GM12878 (cell line): ENCODE measurements at regions of chrX and their contacts with region 1.

Region 1: GRCh38 chrX:12894074-12895030 is 12.1 kb upstream of the TLR8 start:
- DNase-seq: no peak
- ATAC-seq: peak; percentile 61
- H3K4me3 ChIP-seq: no peak overlapping the region
- H3K27ac ChIP-seq: no peak overlapping the region
- H3K4me1 ChIP-seq: peaks cover 43% of the 10 kb centered on the region
- H3K27me3 ChIP-seq: no peaks in the 10 kb centered on the region
- CTCF ChIP-seq: peak; percentile 84 to 88 (median 84)
- EP300 ChIP-seq: no peak
- POLR2A ChIP-seq: no peak
- RAD21 ChIP-seq: peak; percentile 96

Region 2: GRCh38 chrX:12825801-12826200 is 68.6 kb before region 1 on chrX:
- CTCF ChIA-PET with region 1: interaction called, 23 read pairs
- POLR2A ChIA-PET with region 1: no interaction called
- RAD21 ChIA-PET with region 1: interaction called, 3 read pairs
- SMC1A ChIA-PET with region 1: interaction called, 5 read pairs
- in situ Hi-C with region 1: loop called (anchors 5 kb)
- intact Hi-C with region 1: no loop called
- DNase-seq: no peak
- ATAC-seq: no peak
- H3K4me3 ChIP-seq: no peak overlapping the region
- H3K27ac ChIP-seq: no peak overlapping the region
- H3K4me1 ChIP-seq: no peaks in the 10 kb centered on the region
- H3K27me3 ChIP-seq: no peaks in the 10 kb centered on the region
- CTCF ChIP-seq: no peak
- EP300 ChIP-seq: no peak
- POLR2A ChIP-seq: no peak
- RAD21 ChIP-seq: no peak

Region 3: DNA sequence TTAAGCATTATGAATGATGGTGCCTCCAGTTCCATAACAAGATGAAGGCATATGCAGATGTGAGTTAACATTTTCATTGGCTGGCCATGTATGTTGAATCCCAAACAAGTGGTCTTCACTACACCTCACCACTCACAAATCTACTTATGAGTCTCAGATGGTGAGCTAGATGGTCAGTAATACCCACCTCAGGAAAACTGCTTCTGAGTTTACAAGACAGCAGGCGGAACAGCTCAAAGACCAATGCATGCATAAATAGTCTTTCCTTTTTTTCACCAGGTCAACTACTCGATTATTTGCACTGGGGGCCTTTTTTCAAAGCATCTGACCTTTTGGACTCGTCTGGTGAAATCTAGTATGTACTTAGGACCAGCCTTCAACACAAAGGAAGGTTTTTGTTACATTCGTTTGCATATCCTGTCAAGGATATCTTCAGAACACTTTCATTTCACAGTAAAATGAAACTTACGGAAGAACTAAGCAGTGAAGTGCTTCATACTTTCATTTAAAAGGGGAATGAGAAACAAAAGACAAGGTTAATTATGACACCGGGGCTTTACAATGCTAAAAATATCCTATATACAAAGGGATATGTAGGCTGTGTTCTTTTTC is 50.6 kb before region 1 on chrX:
- CTCF ChIA-PET with region 1: interaction called, 9 read pairs
- POLR2A ChIA-PET with region 1: interaction called, 4 read pairs
- RAD21 ChIA-PET with region 1: interaction called, 7 read pairs
- SMC1A ChIA-PET with region 1: interaction called, 45 read pairs
- in situ Hi-C with region 1: no loop called
- intact Hi-C with region 1: loop called (anchors 1 kb)
- DNase-seq: peak; percentile 85
- ATAC-seq: peak; percentile 92
- H3K4me3 ChIP-seq: peak overlapping the region; percentile 42; the same call in 1 of the 2 replicates
- H3K27ac ChIP-seq: peak overlapping the region; percentile 100
- H3K4me1 ChIP-seq: peaks cover 29% of the 10 kb centered on the region
- H3K27me3 ChIP-seq: no peaks in the 10 kb centered on the region
- CTCF ChIP-seq: no peak
- EP300 ChIP-seq: peak in 1 of 2 experiments; percentile 57; a peak in 1 of 4 replicates
- POLR2A ChIP-seq: no peak
- RAD21 ChIP-seq: no peak

Region 4: DNA sequence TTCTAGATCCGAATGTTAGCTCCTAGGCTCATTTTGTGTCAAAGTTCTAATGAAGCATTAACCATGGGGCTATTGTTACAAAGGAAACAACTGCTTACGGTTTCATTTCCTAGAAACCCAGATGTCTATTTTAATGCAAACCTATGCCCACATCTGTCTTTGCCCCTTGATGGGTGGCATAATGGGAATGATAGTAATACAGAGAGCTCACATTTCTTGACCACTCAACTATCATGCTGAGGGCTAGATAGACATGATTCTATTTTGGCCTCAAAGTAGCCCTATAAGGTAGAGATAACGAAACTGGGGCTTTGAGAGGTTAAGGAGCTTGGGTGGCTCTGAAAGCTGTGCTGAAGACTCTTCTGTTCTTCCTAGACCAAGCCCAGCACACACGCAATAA is 25.6 kb before region 1 on chrX:
- CTCF ChIA-PET with region 1: interaction called, 7 read pairs
- POLR2A ChIA-PET with region 1: interaction called, 8 read pairs
- RAD21 ChIA-PET with region 1: interaction called, 47 read pairs
- SMC1A ChIA-PET with region 1: interaction called, 77 read pairs
- in situ Hi-C with region 1: no loop called
- intact Hi-C with region 1: loop called (anchors 1 kb)
- DNase-seq: peak; percentile 78
- ATAC-seq: peak; percentile 73
- H3K4me3 ChIP-seq: peak overlapping the region; percentile 63
- H3K27ac ChIP-seq: peak overlapping the region; percentile 97
- H3K4me1 ChIP-seq: peaks cover 28% of the 10 kb centered on the region
- H3K27me3 ChIP-seq: no peaks in the 10 kb centered on the region
- CTCF ChIP-seq: no peak
- EP300 ChIP-seq: peak in 1 of 2 experiments; percentile 48; a peak in 1 of 4 replicates
- POLR2A ChIP-seq: no peak; the same call in 1 of the 2 replicates
- RAD21 ChIP-seq: no peak

Region 5: DNA sequence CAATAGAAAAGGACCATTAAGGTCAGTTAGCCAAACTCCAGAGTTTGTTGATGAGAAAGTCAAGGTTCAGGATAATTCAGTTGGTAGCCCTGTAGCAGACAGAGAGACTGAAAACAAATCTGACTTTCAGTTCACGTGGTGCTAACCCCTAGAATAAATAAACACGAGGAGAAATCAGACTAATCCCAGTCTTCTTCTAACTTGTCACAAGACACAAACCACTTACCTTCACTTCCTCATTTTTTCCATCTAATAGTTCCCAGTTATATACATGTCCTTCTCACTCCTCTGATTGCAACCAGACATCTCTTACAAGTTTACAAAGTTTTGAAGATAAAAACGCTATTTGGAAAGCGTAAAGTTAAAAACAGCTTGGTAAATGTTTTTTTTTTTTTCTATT is 19.8 kb before region 1 on chrX:
- CTCF ChIA-PET with region 1: interaction called, 5 read pairs
- POLR2A ChIA-PET with region 1: interaction called, 8 read pairs
- RAD21 ChIA-PET with region 1: interaction called, 47 read pairs
- SMC1A ChIA-PET with region 1: interaction called, 77 read pairs
- in situ Hi-C with region 1: no loop called
- intact Hi-C with region 1: loop called (anchors 1 kb)
- DNase-seq: no peak
- ATAC-seq: peak; percentile 49
- H3K4me3 ChIP-seq: 0 out of 2 replicates have a peak overlapping the region, but pooled peaks have one; percentile 34
- H3K27ac ChIP-seq: 0 out of 2 replicates have a peak overlapping the region, but pooled peaks have one; percentile 35
- H3K4me1 ChIP-seq: peaks cover 22% of the 10 kb centered on the region
- H3K27me3 ChIP-seq: no peaks in the 10 kb centered on the region
- CTCF ChIP-seq: no peak
- EP300 ChIP-seq: no peak
- POLR2A ChIP-seq: no peak
- RAD21 ChIP-seq: no peak

Region 6: GRCh38 chrX:13235930-13236329 is 341.6 kb after region 1 on chrX:
- CTCF ChIA-PET with region 1: no interaction called
- POLR2A ChIA-PET with region 1: no interaction called
- RAD21 ChIA-PET with region 1: no interaction called
- SMC1A ChIA-PET with region 1: no interaction called
- in situ Hi-C with region 1: no loop called
- intact Hi-C with region 1: no loop called
- DNase-seq: no peak
- ATAC-seq: no peak
- H3K4me3 ChIP-seq: no peak overlapping the region
- H3K27ac ChIP-seq: no peak overlapping the region
- H3K4me1 ChIP-seq: no peaks in the 10 kb centered on the region
- H3K27me3 ChIP-seq: no peaks in the 10 kb centered on the region
- CTCF ChIP-seq: no peak
- EP300 ChIP-seq: no peak
- POLR2A ChIP-seq: no peak
- RAD21 ChIP-seq: no peak

Region 7: GRCh38 chrX:14899607-14900006 is 2005.3 kb after region 1 on chrX:
- CTCF ChIA-PET with region 1: no interaction called
- POLR2A ChIA-PET with region 1: no interaction called
- RAD21 ChIA-PET with region 1: no interaction called
- SMC1A ChIA-PET with region 1: no interaction called
- in situ Hi-C with region 1: loop called (anchors 25 kb)
- intact Hi-C with region 1: no loop called
- DNase-seq: no peak
- ATAC-seq: peak; percentile 92
- H3K4me3 ChIP-seq: no peak overlapping the region
- H3K27ac ChIP-seq: no peak overlapping the region
- H3K4me1 ChIP-seq: no peaks in the 10 kb centered on the region
- H3K27me3 ChIP-seq: no peaks in the 10 kb centered on the region
- CTCF ChIP-seq: no peak
- EP300 ChIP-seq: peak in 1 of 2 experiments; percentile 43; a peak in 1 of 4 replicates
- POLR2A ChIP-seq: no peak
- RAD21 ChIP-seq: no peak